ENCODE measurements at regions of chr1 and their contacts with region 1.

Region 1: GRCh38 chr1:201170533-201171062 is 16.3 kb upstream of the TMEM9 start:
- DNase-seq: peak; percentile 95 to 98
- H3K4me3 ChIP-seq: peak overlapping the region; percentile 57 to 80
- H3K27ac ChIP-seq: peak overlapping the region; percentile 71 to 97
- H3K4me1 ChIP-seq: peaks cover 0 to 12% (median 8%) of the 10 kb centered on the region in 4 donors
- H3K27me3 ChIP-seq: no peaks in the 10 kb centered on the region
- CTCF ChIP-seq: no peak

Region 2: DNA sequence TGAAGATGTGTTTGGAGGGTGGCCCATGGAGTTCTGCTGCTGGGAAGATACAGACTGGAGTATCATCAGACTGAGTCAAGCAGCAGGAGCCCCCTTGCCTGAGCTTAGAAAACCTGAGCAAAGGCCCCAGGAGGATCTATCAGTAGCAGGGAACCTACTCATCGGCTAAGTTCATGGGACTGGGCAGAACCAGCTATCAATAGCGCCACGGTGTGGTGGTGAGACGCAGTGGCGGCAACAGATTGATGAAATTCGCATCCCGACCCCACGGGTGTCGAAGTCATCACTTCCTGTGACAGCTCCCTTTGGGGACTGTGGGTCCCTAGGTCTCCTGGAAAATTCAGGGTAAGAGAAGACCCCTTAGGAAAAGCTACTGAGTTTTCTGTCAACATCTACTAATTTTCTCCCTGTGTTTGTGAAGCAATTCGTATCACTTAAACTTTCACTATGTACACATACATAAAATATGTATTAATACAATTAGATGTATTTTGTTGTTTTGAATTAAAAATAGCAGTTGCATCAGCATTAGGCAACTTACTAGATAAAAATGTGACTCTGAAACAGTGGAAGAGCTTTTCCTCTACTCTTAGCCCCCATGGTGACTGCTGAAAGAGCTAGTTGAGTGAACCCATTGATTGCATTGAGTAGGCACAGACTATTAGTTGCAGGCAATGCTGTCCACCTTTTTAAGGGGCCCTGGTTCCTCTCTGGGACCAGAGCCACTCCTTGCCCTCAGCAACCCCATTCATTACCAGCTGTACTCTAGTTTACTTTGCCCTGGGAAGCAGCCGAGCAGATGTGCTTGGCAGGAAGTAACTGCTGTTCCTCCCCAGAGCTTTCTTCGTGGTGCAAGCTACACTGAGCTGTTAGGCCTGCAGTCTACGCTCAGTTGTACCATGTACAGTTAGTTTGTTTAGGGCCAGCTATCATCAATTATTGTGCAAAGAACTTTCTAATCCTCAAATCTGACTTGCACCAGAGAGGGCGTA is 51.1 kb before region 1 on chr1:
- intact Hi-C with region 1: no loop called
- DNase-seq: no peak
- H3K4me3 ChIP-seq: no peak overlapping the region
- H3K27ac ChIP-seq: no peak overlapping the region
- H3K4me1 ChIP-seq: peaks cover 0 to 7% (median 6%) of the 10 kb centered on the region in 4 donors
- H3K27me3 ChIP-seq: peaks cover 0 to 29% of the 10 kb centered on the region in 2 donors
- CTCF ChIP-seq: peak; percentile 56 to 69

Region 3: DNA sequence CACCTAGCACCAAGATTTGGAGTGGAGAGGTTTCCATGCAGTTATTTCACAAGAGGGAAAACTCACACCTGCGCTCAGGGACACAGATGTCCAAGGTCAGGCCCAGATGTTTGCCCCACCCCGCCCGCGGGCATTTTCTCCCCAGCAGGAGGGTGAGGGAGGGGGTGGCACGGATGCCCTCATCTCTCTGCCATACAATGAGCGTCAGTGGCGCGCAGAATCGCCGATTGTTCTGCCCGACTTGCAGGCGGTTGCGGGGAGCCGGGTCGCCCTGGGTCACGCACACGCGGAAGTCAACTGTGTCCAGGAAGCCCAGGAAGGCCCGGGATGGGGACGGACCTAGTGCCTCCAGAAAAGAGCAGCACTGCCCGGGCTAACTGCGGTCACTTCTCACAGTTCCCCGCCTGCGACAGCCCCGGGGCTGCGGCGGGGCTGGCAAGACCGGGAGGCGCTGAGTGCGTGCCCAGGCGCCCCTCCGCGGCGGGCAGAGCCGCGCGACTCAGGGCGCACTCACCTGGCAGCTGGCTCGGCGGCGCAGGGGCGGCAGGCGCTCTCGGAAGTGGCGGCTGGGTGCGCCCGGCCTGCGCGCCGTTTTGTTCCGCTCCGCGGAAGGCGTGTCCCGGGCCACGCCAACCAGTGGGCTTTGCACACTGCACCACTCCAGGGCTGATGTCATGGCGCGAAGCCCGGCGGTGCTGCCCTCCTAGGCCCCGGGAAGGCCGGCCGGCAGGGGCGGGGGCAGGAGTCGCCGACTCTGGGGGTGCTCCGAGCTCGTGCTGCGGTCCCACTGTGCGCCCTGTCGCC is 336.2 kb after region 1 on chr1 and contains the start of gene CSRP1:
- intact Hi-C with region 1: loop called (anchors 5 kb)
- DNase-seq: peak; percentile 87 to 95
- H3K4me3 ChIP-seq: peak within 1 kb of the TSS; percentile 82 to 93
- H3K27ac ChIP-seq: peak within 1 kb of the TSS; percentile 93 to 97
- H3K4me1 ChIP-seq: peaks cover 0 to 59% (median 36%) of the 10 kb centered on the region in 4 donors
- H3K27me3 ChIP-seq: no peaks in the 10 kb centered on the region
- CTCF ChIP-seq: peak in 1 of 2 experiments; percentile 9

Measured in tibial artery (tissue), 4 donors.